ENCODE measurements at regions of chr16 and their contacts with region 1.

Region 1: GRCh38 chr16:88941913-88942909 is 34.8 kb downstream of the CBFA2T3 start:
- DNase-seq: no peak
- H3K4me3 ChIP-seq: no peak overlapping the region
- CTCF ChIP-seq: no peak
- POLR2A ChIP-seq: no peak

Region 2: GRCh38 chr16:87127061-87127739 is 1815.0 kb before region 1 on chr16:
- intact Hi-C with region 1: loop called (anchors 5 kb)
- DNase-seq: peak in 1 of 2 donors; percentile 37
- H3K4me3 ChIP-seq: no peak overlapping the region
- CTCF ChIP-seq: no peak
- POLR2A ChIP-seq: no peak

Region 3: DNA sequence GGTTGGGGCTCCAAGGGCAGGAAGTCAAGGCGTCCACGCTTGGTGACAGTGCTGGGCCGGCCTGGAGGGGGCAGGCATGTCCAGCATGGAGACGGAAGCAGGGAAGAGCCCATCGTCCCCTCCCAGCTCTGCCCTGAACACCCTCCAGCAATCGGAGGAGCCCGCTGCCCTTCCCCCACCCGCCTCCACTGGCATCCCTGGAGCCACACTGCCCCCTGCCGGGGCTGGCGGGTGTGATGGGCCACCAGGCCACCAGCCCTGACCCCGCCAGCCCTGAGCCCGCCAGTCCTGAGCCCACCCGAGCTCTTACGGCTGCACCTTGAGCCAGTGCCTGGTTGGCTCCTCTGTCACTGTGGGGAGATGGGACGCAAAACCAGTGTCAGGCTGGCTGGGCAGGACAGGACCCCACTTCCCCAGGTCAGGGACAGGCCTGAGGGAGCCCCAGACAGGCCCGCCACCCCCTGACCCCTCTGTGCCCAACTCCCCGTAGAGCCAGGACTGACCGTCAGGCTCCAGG is 225.3 kb after region 1 on chr16:
- intact Hi-C with region 1: loop called (anchors 5 kb)
- DNase-seq: peak; percentile 68 to 95
- H3K4me3 ChIP-seq: no peak overlapping the region
- CTCF ChIP-seq: peak in 1 of 3 donors; percentile 94
- POLR2A ChIP-seq: no peak